Activated T-helper 2 cell treated with anti-CD3 and anti-CD28 coated beads, Interferon-gamma antibody, Interleukin-2, Interleukin-4, amounts not matched to agents 10 μg/mL and 5 μg/mL and 100 μg/mL, durations not matched to agents 14 hours and 24 hours and 36 hours (primary cell): ENCODE measurements at regions of chr4 and their contacts with region 1.

Region 1: GRCh38 chr4:182806259-182807252 is 110.6 kb downstream of the DCTD start:
- DNase-seq: peak; percentile 58
- H3K4me3 Mint-ChIP-seq: peak overlapping the region; percentile 57
- H3K27ac Mint-ChIP-seq: peak overlapping the region; percentile 39
- H3K4me1 Mint-ChIP-seq: peaks cover 16% of the 10 kb centered on the region
- H3K27me3 Mint-ChIP-seq: peaks cover 15% of the 10 kb centered on the region

Region 2: GRCh38 chr4:182478475-182478874 is 328.1 kb before region 1 on chr4:
- intact Hi-C with region 1: loop called (anchors 5 kb)
- DNase-seq: no peak
- H3K4me3 Mint-ChIP-seq: no peak overlapping the region
- H3K27ac Mint-ChIP-seq: no peak overlapping the region
- H3K4me1 Mint-ChIP-seq: no peaks in the 10 kb centered on the region
- H3K27me3 Mint-ChIP-seq: peaks cover 2% of the 10 kb centered on the region

Region 3: GRCh38 chr4:182492422-182492821 is 314.1 kb before region 1 on chr4:
- intact Hi-C with region 1: loop called (anchors 5 kb)
- DNase-seq: no peak
- H3K4me3 Mint-ChIP-seq: no peak overlapping the region
- H3K27ac Mint-ChIP-seq: no peak overlapping the region
- H3K4me1 Mint-ChIP-seq: peaks cover 8% of the 10 kb centered on the region
- H3K27me3 Mint-ChIP-seq: peaks cover 6% of the 10 kb centered on the region

Region 4: GRCh38 chr4:182880387-182881356 is 74.1 kb after region 1 on chr4:
- intact Hi-C with region 1: no loop called
- DNase-seq: no peak
- H3K4me3 Mint-ChIP-seq: no peak overlapping the region
- H3K27ac Mint-ChIP-seq: no peak overlapping the region
- H3K4me1 Mint-ChIP-seq: no peaks in the 10 kb centered on the region
- H3K27me3 Mint-ChIP-seq: no peaks in the 10 kb centered on the region